Activated CD4-positive, alpha-beta memory T cell treated with anti-CD3 and anti-CD28 coated beads for 36 hours (primary cell): ENCODE measurements at regions of chr15 and their contacts with region 1.

Region 1: DNA sequence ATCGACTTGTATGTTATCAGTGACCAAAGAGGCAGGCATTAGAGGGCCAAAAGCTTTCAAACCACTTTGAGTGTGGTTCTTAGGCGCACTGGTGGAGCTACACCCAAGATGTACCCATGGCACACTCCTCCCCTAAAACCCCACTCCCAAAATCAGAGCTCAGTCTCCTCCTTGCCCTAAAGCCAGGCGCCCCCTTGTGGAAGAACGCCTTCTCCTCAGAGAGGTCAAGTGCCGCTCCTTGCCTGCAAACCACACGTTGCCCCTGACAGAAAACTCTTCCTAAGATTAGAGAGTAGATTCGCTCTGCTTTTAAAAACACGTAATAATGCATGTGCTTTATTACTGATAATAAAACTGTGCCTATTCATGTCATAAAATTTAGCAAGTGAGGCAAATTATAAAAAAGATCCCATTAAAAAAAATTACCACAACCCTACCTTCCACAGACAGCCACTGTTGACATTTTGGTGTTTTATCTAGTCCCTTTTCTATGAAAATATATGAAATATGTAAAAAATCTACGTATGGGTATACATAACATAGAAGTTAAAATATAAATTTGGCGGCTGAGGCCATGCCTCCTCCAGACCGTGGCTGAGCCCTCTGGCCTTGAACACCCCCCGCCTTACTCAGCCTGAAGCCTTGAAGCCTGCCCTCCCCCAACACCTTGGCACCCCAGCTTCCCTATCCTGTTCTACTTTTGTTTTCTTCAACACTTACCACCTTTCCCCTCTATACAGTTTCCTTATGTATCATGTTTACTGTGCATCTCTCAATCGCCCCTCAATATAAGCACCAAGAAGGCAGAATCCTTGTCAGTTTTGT is 33.5 kb downstream of the BCL2L10 start:
- DNase-seq: peak; percentile 87
- H3K4me3 Mint-ChIP-seq: no peak overlapping the region
- H3K27ac Mint-ChIP-seq: no peak overlapping the region
- H3K4me1 Mint-ChIP-seq: peaks cover 13% of the 10 kb centered on the region
- H3K27me3 Mint-ChIP-seq: no peaks in the 10 kb centered on the region

Region 2: GRCh38 chr15:51888593-51889195 is 190.4 kb before region 1 on chr15:
- CTCF ChIA-PET with region 1: interaction called, 14 read pairs
- POLR2A ChIA-PET with region 1: no interaction called
- intact Hi-C with region 1: loop called (anchors 5 kb)
- DNase-seq: no peak
- H3K4me3 Mint-ChIP-seq: no peak overlapping the region
- H3K27ac Mint-ChIP-seq: no peak overlapping the region
- H3K4me1 Mint-ChIP-seq: peaks cover 2% of the 10 kb centered on the region
- H3K27me3 Mint-ChIP-seq: no peaks in the 10 kb centered on the region

Region 3: DNA sequence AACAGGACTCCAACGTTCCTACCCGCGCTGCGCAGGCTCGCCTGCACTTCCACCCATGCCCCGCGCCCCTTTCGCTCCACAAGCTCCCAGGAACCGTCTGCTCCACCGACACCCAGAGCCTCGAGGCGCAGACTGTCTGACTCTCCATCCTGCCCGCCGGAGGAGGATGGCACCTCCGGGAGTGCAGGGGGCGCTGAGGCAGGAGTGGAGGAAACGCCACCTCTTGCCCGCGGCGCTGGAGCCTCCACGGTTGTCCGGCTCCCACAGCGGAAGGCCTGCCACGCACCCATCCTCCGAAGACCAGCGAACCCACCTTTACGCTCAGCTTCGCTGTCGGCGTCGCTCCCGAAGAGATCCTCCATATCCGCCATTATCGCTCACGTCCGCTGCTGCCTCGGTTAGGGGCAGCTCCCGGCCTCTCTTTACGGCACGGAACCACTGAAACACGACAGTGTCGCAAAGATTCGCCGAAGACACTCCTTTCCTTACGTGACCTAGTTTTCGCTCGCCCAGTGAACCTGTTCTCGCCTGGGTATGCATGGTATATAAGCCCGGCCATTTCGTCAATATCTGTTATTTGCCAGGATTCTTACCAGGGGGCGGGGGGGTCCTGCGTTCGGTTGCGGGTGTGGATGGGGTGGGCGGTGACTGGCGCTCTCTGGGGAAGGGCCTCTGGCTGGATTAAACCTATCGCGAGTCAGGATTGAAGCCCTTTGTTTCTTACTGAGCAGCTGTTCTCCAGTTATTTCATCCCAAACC is 107.5 kb before region 1 on chr15 and contains the start of gene LEO1:
- CTCF ChIA-PET with region 1: interaction called, 29 read pairs
- POLR2A ChIA-PET with region 1: no interaction called
- intact Hi-C with region 1: no loop called
- DNase-seq: peak; percentile 93
- H3K4me3 Mint-ChIP-seq: peak within 1 kb of the TSS; percentile 96
- H3K27ac Mint-ChIP-seq: peak within 1 kb of the TSS; percentile 94
- H3K4me1 Mint-ChIP-seq: peaks cover 17% of the 10 kb centered on the region
- H3K27me3 Mint-ChIP-seq: peaks cover 2% of the 10 kb centered on the region
- total RNA-seq, gene LEO1: 27.3 to 28.3 TPM

Region 4: GRCh38 chr15:52018693-52019387 is 60.2 kb before region 1 on chr15 and contains the start of gene MAPK6:
- CTCF ChIA-PET with region 1: interaction called, 4 read pairs
- POLR2A ChIA-PET with region 1: no interaction called
- intact Hi-C with region 1: loop called (anchors 1 kb)
- DNase-seq: peak; percentile 95
- H3K4me3 Mint-ChIP-seq: peak within 1 kb of the TSS; percentile 98
- H3K27ac Mint-ChIP-seq: peak within 1 kb of the TSS; percentile 99
- H3K4me1 Mint-ChIP-seq: peaks cover 39% of the 10 kb centered on the region
- H3K27me3 Mint-ChIP-seq: no peaks in the 10 kb centered on the region
- total RNA-seq, gene MAPK6: 39.9 to 40.8 TPM

Region 5: DNA sequence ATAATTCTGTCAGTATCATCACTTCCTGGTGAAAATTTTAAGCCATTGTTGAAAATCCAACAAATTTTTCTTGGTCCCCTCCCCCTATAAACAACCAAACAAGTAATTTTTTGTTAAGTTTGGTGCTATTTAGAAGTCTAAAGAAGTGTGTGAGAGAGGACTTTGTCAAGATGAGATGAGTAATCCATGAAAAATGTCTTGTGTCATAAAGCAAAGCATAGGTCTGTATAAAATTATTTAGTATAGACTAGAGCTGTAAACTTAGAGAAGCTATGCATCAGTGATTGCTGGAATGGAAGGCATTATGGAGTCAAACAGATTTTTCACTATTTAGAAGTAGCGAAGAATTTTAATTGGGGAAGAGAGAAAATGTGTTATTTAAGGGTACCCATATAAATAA is 28.7 kb before region 1 on chr15:
- CTCF ChIA-PET with region 1: interaction called, 31 read pairs
- POLR2A ChIA-PET with region 1: no interaction called
- intact Hi-C with region 1: no loop called
- DNase-seq: no peak
- H3K4me3 Mint-ChIP-seq: no peak overlapping the region
- H3K27ac Mint-ChIP-seq: no peak overlapping the region
- H3K4me1 Mint-ChIP-seq: peaks cover 16% of the 10 kb centered on the region
- H3K27me3 Mint-ChIP-seq: no peaks in the 10 kb centered on the region

Region 6: GRCh38 chr15:52103217-52104207 is 24.4 kb after region 1 on chr15:
- CTCF ChIA-PET with region 1: no interaction called
- POLR2A ChIA-PET with region 1: no interaction called
- intact Hi-C with region 1: no loop called
- DNase-seq: peak; percentile 43
- H3K4me3 Mint-ChIP-seq: no peak overlapping the region
- H3K27ac Mint-ChIP-seq: no peak overlapping the region
- H3K4me1 Mint-ChIP-seq: no peaks in the 10 kb centered on the region
- H3K27me3 Mint-ChIP-seq: peaks cover 6% of the 10 kb centered on the region

Region 7: GRCh38 chr15:52227456-52227855 is 148.4 kb after region 1 on chr15:
- CTCF ChIA-PET with region 1: interaction called, 9 read pairs
- POLR2A ChIA-PET with region 1: no interaction called
- intact Hi-C with region 1: loop called (anchors 10 kb)
- DNase-seq: peak; percentile 81
- H3K4me3 Mint-ChIP-seq: no peak overlapping the region
- H3K27ac Mint-ChIP-seq: no peak overlapping the region
- H3K4me1 Mint-ChIP-seq: peaks cover 18% of the 10 kb centered on the region
- H3K27me3 Mint-ChIP-seq: no peaks in the 10 kb centered on the region